ENCODE measurements at regions of chr1 and their contacts with region 1.

Region 1: DNA sequence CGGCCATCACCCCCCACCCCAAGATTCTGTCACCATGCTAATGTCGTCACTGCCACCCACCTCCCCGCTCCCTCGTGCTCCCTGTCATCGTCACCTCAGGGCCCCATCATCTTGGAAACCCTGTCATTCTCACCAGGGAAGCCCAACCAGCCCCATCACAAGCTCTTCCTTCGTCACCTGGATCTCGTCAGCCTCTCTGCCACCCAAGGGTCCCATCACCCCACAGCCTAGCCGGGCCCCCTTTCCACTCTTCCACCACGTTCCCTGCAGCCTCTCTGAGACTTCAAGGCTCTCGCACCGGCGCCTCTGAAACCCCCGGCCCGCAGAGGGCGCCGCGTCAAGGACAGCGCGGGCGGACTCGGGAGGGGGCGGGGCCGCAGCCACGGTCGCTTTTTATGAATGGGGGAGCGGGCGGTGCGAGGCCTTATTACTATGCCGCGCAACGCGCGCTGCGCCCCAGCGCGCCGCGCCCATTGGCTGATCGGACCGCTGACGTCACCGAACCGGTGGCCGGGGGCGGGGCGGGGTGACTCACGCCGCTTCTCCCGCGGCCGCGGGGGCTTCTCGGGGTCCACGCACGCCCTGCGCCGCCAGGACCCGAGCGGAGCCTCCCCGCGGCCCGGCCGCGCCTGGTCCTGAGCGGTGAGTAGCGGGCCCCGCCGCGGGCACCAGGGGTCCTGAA is at the start of gene GPR3:
- DNase-seq: peak; percentile 96
- total RNA-seq, gene GPR3: 0.37 to 1.2 TPM

Region 2: DNA sequence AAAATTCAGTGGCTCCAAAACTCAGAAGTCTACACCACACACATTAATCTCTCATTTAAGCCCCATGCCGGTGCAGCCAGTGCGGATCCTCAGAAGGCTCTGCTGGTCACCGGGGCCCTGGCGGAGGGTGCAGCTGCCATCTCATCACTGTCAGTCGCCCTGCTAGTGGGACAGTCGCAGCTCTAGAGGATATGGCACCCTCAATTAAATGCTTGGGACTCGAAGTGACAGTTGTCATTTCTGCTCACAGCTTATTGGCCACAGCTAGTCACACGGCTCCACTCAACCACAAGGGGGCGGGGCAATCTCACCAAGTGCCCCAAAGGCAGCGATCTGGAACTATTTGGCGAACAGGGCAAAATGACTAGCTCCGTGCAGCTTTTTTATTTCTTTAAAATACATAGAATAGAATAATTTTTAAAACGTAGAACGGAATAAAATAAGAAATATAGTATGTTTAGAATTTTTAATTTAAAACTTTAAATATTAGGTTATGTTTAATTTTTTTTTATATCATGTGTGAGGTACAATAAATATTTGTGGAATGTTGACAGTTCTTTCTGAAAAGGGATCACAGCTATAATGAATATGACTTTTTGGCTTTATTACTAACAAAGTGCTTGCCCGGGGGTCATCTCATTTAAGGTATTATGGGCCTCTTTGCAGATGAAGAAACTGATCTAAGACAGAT is 1783.6 kb before region 1 on chr1:
- intact Hi-C with region 1: loop called in 1 of 2 experiments (anchors 5 kb)
- DNase-seq: peak; percentile 94

Region 3: DNA sequence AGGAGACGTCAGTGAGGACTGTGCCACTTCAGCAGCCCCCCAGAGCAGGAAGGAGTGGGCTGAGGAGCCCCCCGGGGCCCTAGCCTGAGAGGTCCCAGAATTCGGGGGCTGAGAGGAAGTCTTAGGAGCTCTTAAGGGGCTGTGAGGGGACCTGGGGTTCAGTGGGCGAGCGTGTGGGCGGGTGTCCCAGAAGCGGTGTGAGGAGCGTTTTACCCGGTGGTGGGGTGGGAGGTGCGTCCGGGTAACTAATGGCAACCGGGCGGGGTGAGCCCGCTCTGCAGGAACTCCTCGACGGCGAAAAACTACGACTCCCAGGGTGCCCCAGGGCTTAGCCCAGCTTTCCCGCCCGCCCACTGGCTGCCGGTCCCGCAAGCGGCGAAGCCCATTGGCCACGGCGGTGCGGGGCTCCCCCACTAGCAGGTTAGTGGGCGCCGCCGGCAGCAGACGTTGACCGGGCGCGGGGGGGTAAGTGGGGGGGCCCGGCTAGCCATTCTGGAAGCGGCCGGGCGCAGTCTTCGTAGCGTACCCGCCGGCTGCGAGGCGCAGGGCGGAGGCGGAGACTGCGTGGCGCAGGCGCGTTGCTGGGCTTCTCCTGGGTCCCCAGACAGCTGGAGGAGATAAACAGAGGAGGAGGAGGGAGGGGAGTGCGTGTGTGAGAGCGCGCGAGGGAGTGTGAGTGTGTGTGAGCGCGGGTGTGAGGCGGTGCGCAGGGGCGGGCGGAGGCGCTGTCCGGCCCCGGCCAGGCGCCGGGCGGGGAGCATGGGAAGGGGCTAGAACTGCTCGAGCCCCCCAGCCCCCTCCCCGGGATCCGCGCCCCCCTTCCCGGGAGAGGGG is 158.0 kb before region 1 on chr1 and contains the start of gene WDTC1:
- intact Hi-C with region 1: no loop called
- DNase-seq: peak; percentile 99
- total RNA-seq, gene WDTC1: 22.6 to 27.4 TPM

Region 4: GRCh38 chr1:27300341-27301051 is 91.7 kb before region 1 on chr1:
- intact Hi-C with region 1: loop called (anchors 5 kb)
- DNase-seq: peak; percentile 95

Region 5: DNA sequence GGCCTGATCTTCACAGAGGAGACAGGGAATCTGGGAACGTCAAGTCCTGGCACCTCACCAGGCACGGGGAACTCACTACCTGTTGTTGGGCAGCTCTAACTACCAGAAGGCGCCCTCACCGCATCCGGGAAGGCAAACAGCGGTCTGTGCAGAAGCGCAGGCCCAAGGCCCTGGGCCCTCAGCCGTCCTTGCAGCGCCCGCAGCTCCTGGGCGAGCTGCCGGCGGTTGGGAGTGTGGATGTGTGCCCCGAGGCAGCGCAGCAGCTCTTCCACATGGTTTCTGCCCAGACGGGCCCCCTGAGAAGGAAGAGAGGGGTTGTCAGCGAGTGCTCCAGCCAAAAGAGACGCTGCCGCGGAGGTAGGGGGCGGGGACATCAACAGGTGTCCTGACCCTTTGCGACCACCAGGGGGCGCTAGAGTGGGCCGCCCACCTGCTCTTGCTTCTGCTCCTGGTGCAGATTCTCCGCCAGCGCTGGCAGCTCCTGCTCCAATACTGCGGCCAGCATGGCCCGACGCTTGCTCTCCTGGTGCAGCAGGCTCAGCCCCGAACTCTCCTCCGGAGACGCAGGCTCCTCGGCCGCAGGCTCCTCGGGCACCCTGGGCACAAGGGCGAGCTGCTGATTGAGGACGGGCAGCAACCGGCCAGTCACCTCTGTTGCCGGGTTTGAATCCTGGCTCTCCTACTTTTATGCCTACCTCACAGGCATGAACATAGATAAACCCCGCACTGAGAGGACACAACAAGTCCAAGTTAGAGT is 34.8 kb before region 1 on chr1:
- intact Hi-C with region 1: loop called in 1 of 2 experiments (anchors 5 kb)
- DNase-seq: peak; percentile 94

Region 6: GRCh38 chr1:27662707-27663393 is 270.6 kb after region 1 on chr1:
- intact Hi-C with region 1: loop called (anchors 10 kb)
- DNase-seq: peak; percentile 91